Caco-2 (cell line): ENCODE measurements at regions of chr17 and their contacts with region 1.

Region 1: GRCh38 chr17:50865984-50866774 is at the start of gene TOB1:
- DNase-seq: peak; percentile 100
- H3K4me3 ChIP-seq: peak within 1 kb of the TSS; percentile 96
- H3K4me3 Mint-ChIP-seq: peak within 1 kb of the TSS; percentile 79
- H3K27ac Mint-ChIP-seq: peak within 1 kb of the TSS; percentile 95
- H3K4me1 ChIP-seq: peaks cover 15% of the 10 kb centered on the region
- H3K4me1 Mint-ChIP-seq: peaks cover 23% of the 10 kb centered on the region
- H3K27me3 ChIP-seq: no peaks in the 10 kb centered on the region
- H3K27me3 Mint-ChIP-seq: no peaks in the 10 kb centered on the region
- CTCF ChIP-seq: no peak
- total RNA-seq, gene TOB1: 114 TPM in 2 replicates

Region 2: DNA sequence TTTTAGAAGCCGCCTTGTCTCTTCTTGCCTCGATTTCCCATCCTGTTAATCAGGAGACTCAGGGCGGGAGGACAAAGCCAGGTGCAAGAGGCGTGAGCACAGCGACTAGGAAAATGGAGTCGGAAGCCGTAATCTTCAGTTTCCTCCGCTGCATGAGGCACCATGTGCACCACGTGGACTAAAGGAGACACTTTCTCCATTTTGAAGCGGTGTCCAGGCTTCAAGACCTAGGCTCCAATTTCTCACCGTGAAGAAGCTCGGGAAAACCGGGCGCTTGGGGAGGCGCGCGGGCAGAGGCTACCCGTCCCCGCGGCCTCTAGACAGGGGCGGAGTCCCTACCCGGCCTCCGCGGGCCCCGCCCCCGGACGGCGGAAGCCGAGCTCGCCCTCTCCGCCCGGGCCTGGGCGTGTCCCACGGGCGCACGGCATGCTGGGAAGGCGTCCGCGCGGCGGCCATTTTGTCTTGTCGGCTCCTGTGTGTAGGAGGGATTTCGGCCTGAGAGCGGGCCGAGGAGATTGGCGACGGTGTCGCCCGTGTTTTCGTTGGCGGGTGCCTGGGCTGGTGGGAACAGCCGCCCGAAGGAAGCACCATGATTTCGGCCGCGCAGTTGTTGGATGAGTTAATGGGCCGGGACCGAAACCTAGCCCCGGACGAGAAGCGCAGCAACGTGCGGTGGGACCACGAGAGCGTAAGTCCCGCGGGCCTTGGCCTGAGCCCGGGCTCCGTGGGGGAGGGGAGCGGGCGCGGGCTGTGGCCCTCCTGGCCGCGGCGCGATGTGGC is 146.8 kb before region 1 on chr17 and contains the start of gene LUC7L3:
- CTCF ChIA-PET with region 1: no interaction called
- POLR2A ChIA-PET with region 1: interaction called, 13 read pairs
- intact Hi-C with region 1: loop called (anchors 1 kb)
- DNase-seq: peak; percentile 99 to 100
- H3K4me3 ChIP-seq: peak within 1 kb of the TSS; percentile 88
- H3K4me3 Mint-ChIP-seq: peak within 1 kb of the TSS; percentile 97
- H3K27ac Mint-ChIP-seq: peak within 1 kb of the TSS; percentile 100
- H3K4me1 ChIP-seq: peaks cover 23% of the 10 kb centered on the region
- H3K4me1 Mint-ChIP-seq: peaks cover 18% of the 10 kb centered on the region
- H3K27me3 ChIP-seq: no peaks in the 10 kb centered on the region
- H3K27me3 Mint-ChIP-seq: no peaks in the 10 kb centered on the region
- CTCF ChIP-seq: no peak
- total RNA-seq, gene LUC7L3: 284 and 287 TPM in 2 replicates

Region 3: GRCh38 chr17:50816771-50817751 is 49.1 kb before region 1 on chr17:
- CTCF ChIA-PET with region 1: no interaction called
- POLR2A ChIA-PET with region 1: no interaction called
- intact Hi-C with region 1: no loop called
- DNase-seq: peak in 1 of 2 experiments; percentile 77
- H3K4me3 ChIP-seq: no peak overlapping the region
- H3K4me3 Mint-ChIP-seq: no peak overlapping the region
- H3K27ac Mint-ChIP-seq: no peak overlapping the region
- H3K4me1 ChIP-seq: peaks cover 9% of the 10 kb centered on the region
- H3K4me1 Mint-ChIP-seq: peaks cover 7% of the 10 kb centered on the region
- H3K27me3 ChIP-seq: no peaks in the 10 kb centered on the region
- H3K27me3 Mint-ChIP-seq: no peaks in the 10 kb centered on the region
- CTCF ChIP-seq: peak; percentile 91 to 95

Region 4: DNA sequence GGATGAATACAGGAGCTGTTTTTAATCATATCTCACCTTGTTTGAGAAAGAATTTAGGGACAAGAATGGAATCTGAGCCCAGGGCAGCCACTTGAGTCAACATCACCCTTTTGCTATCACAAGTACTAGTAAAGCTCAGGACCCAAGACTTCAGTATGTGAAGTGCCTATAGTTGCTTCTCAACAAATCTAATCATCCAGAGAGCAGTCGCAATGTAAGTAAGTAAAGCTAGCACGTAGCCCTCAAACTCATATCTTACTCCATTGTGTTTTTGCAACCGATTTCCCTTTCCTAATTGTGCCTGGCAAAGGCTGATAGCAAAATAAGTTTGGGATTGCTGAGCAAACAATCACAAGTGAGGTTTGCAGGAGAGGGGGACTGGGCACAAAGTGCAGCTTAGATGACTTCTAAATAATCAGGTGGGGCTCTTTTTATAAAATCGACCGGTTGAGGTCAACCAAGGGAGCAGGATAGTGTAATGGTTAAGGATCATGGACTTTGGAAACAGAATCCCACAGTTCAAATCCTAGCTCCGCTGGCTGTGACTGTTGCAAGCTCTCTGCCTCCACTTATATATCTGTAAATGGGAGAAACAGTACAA is 13.1 kb before region 1 on chr17:
- CTCF ChIA-PET with region 1: interaction called, 40 read pairs
- POLR2A ChIA-PET with region 1: interaction called, 66 read pairs
- intact Hi-C with region 1: loop called (anchors 1 kb)
- DNase-seq: peak; percentile 36 to 39
- H3K4me3 ChIP-seq: no peak overlapping the region
- H3K4me3 Mint-ChIP-seq: peak overlapping the region; percentile 64
- H3K27ac Mint-ChIP-seq: peak overlapping the region; percentile 74
- H3K4me1 ChIP-seq: peaks cover 25% of the 10 kb centered on the region
- H3K4me1 Mint-ChIP-seq: peaks cover 30% of the 10 kb centered on the region
- H3K27me3 ChIP-seq: no peaks in the 10 kb centered on the region
- H3K27me3 Mint-ChIP-seq: no peaks in the 10 kb centered on the region
- CTCF ChIP-seq: no peak

Region 5: GRCh38 chr17:50904521-50905459 is 38.6 kb after region 1 on chr17:
- CTCF ChIA-PET with region 1: interaction called, 21 read pairs
- POLR2A ChIA-PET with region 1: interaction called, 131 read pairs
- intact Hi-C with region 1: loop called (anchors 1 kb)
- DNase-seq: peak; percentile 83 to 86
- H3K4me3 ChIP-seq: peak overlapping the region; percentile 11
- H3K4me3 Mint-ChIP-seq: peak overlapping the region; percentile 51
- H3K27ac Mint-ChIP-seq: peak overlapping the region; percentile 87
- H3K4me1 ChIP-seq: peaks cover 48% of the 10 kb centered on the region
- H3K4me1 Mint-ChIP-seq: peaks cover 46% of the 10 kb centered on the region
- H3K27me3 ChIP-seq: no peaks in the 10 kb centered on the region
- H3K27me3 Mint-ChIP-seq: no peaks in the 10 kb centered on the region
- CTCF ChIP-seq: peak; percentile 1 to 26

Region 6: GRCh38 chr17:50944054-50944901 is 78.1 kb after region 1 on chr17:
- CTCF ChIA-PET with region 1: interaction called, 31 read pairs
- POLR2A ChIA-PET with region 1: interaction called, 78 read pairs
- intact Hi-C with region 1: loop called (anchors 1 kb)
- DNase-seq: peak; percentile 96 to 98
- H3K4me3 ChIP-seq: peak overlapping the region; percentile 52
- H3K4me3 Mint-ChIP-seq: peak overlapping the region; percentile 73
- H3K27ac Mint-ChIP-seq: peak overlapping the region; percentile 59
- H3K4me1 ChIP-seq: peaks cover 27% of the 10 kb centered on the region
- H3K4me1 Mint-ChIP-seq: peaks cover 29% of the 10 kb centered on the region
- H3K27me3 ChIP-seq: no peaks in the 10 kb centered on the region
- H3K27me3 Mint-ChIP-seq: no peaks in the 10 kb centered on the region
- CTCF ChIP-seq: peak; percentile 53 to 60

Region 7: GRCh38 chr17:51153210-51154072 is 287.3 kb after region 1 on chr17 and contains the start of gene NME1:
- CTCF ChIA-PET with region 1: interaction called, 3 read pairs
- POLR2A ChIA-PET with region 1: no interaction called
- intact Hi-C with region 1: loop called (anchors 5 kb)
- DNase-seq: peak; percentile 98 to 99
- H3K4me3 ChIP-seq: peak within 1 kb of the TSS; percentile 69
- H3K4me3 Mint-ChIP-seq: no peak within 1 kb of the TSS
- H3K27ac Mint-ChIP-seq: no peak within 1 kb of the TSS
- H3K4me1 ChIP-seq: peaks cover 9% of the 10 kb centered on the region
- H3K4me1 Mint-ChIP-seq: no peaks in the 10 kb centered on the region
- H3K27me3 ChIP-seq: no peaks in the 10 kb centered on the region
- H3K27me3 Mint-ChIP-seq: no peaks in the 10 kb centered on the region
- CTCF ChIP-seq: peak; percentile 65 to 89
- total RNA-seq, gene NME1: 278 and 336 TPM in 2 replicates